Activated T-helper 2 cell treated with anti-CD3 and anti-CD28 coated beads, Interferon-gamma antibody, Interleukin-2, Interleukin-4, amounts not matched to agents 10 μg/mL and 5 μg/mL and 100 μg/mL, durations not matched to agents 14 hours and 24 hours and 36 hours (primary cell): ENCODE measurements at regions of chr5 and their contacts with region 1.

Region 1: DNA sequence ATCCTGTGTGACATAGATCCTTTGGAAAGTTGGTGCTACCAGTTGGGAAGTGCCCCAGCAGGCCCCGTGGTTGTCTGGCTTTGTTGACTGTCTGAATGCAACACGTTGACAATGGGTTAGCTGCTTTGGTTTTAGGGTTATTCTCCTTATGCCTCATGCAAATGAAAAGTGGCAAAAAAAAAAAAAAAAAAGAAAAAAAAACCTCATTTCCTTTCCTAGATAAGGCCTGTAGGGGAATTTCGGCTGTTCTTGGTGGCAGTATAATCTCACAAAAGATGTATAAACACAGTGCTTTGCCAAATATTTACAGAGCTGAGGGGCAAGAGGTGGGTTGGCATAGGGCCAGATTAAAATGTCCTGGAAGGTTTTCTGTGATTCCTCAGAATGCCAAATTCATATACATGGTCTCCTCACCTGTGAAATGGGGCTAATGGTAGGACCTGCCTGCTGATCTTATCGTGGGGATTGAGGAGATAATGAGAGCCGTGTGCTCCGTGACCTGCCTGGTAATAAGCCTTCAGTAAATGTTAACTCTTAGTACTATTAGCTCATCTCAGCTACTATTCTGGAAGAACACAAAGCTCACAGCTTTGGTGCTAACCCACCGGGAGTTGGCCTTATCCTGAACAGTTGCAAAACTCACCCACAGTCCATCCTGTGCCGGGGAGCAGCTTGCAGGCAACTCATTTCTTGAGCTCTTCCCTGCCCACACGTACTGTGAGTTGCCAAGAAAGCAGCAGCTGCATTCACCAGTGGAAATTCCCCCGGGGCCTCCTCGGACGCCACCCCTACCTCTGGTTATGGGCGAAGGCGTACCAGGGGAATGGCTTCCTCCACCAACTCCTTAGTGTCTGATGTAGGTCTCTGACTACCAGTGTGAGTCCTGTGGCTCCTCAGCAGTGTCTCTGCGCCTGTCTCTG is 220.3 kb downstream of the NR3C1 start:
- DNase-seq: peak; percentile 33
- H3K4me3 Mint-ChIP-seq: peak overlapping the region; percentile 43
- H3K27ac Mint-ChIP-seq: peak overlapping the region; percentile 82
- H3K4me1 Mint-ChIP-seq: peaks cover 61% of the 10 kb centered on the region
- H3K27me3 Mint-ChIP-seq: no peaks in the 10 kb centered on the region

Region 2: DNA sequence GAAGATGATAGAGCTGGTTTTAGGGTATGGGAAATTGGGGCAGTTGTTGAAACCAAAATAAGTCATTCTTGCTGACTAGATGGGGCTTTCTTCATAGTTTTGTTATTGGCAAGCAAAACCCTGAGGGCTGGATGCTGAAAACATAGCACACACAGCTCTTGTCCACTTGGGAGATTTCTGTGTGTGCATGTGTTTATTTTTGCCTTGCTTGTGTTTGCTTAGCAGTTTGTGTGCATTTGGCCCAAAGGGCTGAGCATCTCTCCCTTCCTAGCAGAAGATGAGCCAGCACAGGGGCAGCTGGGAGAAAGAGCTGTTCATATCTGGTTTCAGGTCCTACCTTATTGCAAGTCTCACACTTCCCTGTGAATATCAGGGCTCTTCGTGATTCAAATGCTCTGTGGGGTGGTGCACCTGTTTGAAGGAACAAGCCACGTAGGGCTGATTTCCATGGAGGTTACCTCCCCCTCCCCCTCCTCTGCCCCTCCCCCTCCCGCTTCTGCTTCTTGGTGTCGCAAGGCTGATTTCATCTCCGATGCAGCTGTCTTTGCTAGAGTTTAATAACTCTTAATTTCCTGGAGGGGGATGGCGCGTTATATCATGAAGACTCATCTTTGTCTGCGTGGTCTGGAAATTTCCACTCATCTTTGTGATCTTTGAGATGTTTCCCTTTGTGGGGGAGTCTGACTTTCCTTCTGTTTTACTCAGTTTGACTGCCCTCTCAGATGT is 116.4 kb before region 1 on chr5:
- intact Hi-C with region 1: loop called (anchors 2 kb)
- DNase-seq: no peak
- H3K4me3 Mint-ChIP-seq: no peak overlapping the region
- H3K27ac Mint-ChIP-seq: peak overlapping the region; percentile 90
- H3K4me1 Mint-ChIP-seq: peaks cover 51% of the 10 kb centered on the region
- H3K27me3 Mint-ChIP-seq: no peaks in the 10 kb centered on the region

Region 3: GRCh38 chr5:143119291-143119769 is 63.8 kb before region 1 on chr5:
- intact Hi-C with region 1: loop called (anchors 1 kb)
- DNase-seq: no peak
- H3K4me3 Mint-ChIP-seq: no peak overlapping the region
- H3K27ac Mint-ChIP-seq: peak overlapping the region; percentile 72
- H3K4me1 Mint-ChIP-seq: peaks cover 57% of the 10 kb centered on the region
- H3K27me3 Mint-ChIP-seq: no peaks in the 10 kb centered on the region

Region 4: GRCh38 chr5:143217065-143217803 is 34.1 kb after region 1 on chr5:
- intact Hi-C with region 1: loop called (anchors 1 kb)
- DNase-seq: no peak
- H3K4me3 Mint-ChIP-seq: no peak overlapping the region
- H3K27ac Mint-ChIP-seq: peak overlapping the region; percentile 84
- H3K4me1 Mint-ChIP-seq: peaks cover 71% of the 10 kb centered on the region
- H3K27me3 Mint-ChIP-seq: no peaks in the 10 kb centered on the region